ENCODE measurements at regions of chr1 and their contacts with region 1.

Region 1: DNA sequence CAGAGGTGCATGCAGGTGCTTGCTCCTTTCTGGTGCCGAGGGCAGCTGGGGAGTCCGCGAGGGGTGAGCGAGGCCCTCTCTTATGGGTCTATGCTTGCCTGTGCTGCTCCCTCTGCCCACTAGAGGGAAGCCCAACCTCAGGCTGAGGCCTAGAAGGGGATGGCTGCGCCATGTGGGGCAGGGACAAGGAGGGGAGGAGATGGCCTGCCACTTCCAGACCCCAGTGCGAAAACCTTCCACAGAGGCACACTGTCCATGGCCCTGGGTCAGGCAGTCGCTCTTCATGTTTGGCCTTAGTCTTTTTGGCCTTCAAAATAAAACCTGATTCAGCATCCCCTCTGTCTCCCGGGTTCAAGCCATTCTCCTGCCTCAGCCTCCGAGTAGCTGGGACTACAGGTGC is 14.0 kb downstream of the RHBG start:
- DNase-seq: peak; percentile 61
- ATAC-seq: peak; percentile 83

Region 2: GRCh38 chr1:156445789-156446263 is 62.8 kb after region 1 on chr1:
- intact Hi-C with region 1: loop called (anchors 1 kb)
- DNase-seq: peak; percentile 90
- ATAC-seq: peak; percentile 94

Measured in Right ventricle myocardium inferior (tissue), 1 donor.